ENCODE measurements at regions of chr17 and their contacts with region 1.

Region 1: DNA sequence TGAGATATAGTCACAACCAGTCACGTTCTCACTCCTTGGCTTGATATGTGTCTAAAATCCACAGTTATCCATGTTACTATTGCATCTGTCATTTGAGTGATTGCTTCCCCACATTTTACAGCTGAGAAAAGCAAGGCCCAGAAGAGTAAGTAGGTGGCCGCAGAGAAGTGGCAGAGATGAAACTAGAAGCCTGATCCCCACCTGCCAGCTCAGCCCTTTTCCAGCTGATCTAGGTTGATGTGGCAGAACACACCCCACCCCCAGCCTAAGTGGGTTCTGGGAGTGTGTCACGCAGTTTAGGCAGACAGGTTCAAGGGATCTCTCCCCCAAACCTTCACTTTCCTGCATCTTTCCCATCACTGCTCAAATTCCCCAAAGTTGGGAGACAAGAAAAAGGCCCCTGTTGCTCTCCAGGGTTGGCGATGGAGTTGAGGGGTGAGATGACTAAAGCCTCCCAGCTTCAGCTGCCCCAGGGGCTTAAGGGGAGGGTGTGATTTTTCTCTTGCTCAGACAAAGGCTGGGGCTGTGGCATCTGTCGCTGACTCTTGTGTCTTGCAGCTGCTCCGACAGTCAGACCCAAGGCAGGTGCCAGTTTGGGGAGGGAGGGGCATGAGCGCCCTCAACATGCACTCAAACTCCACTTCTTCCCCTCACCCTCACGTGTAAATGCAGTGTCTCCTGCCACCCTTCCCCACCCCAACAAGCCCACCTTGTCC is 48.9 kb upstream of the LHX1 start:
- DNase-seq: no peak
- ATAC-seq: no peak

Region 2: DNA sequence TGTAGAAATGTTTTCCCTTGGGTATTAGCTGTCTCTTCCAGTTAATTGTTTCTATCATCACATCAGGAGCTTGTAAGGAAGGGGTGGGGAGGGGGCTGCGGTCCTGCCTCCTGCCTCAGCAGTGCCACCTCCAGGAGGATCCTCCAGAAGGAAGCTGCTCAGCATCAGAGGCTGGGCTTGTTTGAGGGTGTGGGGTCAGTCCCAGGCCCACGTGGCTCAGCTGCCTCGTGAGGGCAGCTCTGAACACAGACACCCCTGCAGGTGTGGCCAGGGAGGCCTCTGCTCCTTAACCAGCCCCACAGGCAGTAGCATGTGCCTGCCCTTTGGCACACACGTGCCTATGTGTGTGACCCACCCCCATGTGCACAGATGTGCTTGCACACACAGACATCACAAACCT is 240.8 kb before region 1 on chr17:
- intact Hi-C with region 1: loop called (anchors 2 kb)
- DNase-seq: no peak
- ATAC-seq: no peak